ENCODE measurements at regions of chr10 and their contacts with region 1.

Region 1: GRCh38 chr10:4767033-4767814 is 58.8 kb upstream of the AKR1E2 start:
- DNase-seq: no peak
- ATAC-seq: peak; percentile 74
- H3K4me3 ChIP-seq: no peak overlapping the region
- H3K27ac ChIP-seq: no peak overlapping the region
- H3K4me1 ChIP-seq: peaks cover 3 to 5% of the 10 kb centered on the region in 2 donors
- H3K27me3 ChIP-seq: no peaks in the 10 kb centered on the region

Region 2: GRCh38 chr10:3231951-3232730 is 1535.1 kb before region 1 on chr10:
- intact Hi-C with region 1: loop called (anchors 5 kb)
- DNase-seq: peak in 1 of 2 donors; percentile 74
- ATAC-seq: peak; percentile 71
- H3K4me3 ChIP-seq: no peak overlapping the region
- H3K27ac ChIP-seq: peak overlapping the region; percentile 29 to 86
- H3K4me1 ChIP-seq: no peaks in the 10 kb centered on the region
- H3K27me3 ChIP-seq: no peaks in the 10 kb centered on the region

Region 3: DNA sequence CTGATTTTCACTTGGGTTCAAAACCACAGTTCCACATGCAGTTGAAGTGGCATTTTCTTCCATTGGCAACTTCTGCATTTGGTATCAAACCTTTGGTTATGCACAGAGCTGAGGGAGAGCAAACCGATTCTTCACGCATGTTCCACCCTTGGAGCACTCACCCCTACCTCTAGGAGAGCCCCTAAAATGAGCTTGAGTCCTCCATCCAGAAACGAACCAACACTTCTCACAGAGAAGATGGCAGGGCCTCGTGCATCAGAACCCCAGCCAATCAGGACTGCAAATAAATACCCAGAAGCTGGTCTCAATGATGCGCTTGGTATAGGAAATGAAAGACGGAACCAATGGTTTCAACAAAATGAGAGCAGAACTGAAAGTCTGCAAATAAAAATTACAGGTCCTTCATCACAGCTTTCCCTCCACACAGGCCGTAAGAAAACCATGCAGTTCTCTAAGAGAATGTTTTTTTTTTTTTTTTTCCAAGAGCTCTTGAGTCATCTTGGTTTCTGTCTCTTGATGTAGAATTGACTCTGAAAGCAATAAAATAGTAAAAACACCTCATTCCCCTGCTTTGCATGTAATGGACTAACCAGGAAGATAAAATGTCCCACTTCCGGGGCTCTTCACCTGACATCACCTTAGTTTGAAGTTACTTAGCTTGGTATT is 1006.1 kb before region 1 on chr10:
- intact Hi-C with region 1: loop called in 1 of 2 experiments (anchors 10 kb)
- DNase-seq: no peak
- ATAC-seq: no peak
- H3K4me3 ChIP-seq: no peak overlapping the region
- H3K27ac ChIP-seq: no peak overlapping the region
- H3K4me1 ChIP-seq: no peaks in the 10 kb centered on the region
- H3K27me3 ChIP-seq: no peaks in the 10 kb centered on the region

Region 4: GRCh38 chr10:4656576-4657182 is 110.5 kb before region 1 on chr10:
- intact Hi-C with region 1: loop called (anchors 5 to 10 kb)
- DNase-seq: no peak
- ATAC-seq: peak; percentile 80
- H3K4me3 ChIP-seq: no peak overlapping the region
- H3K27ac ChIP-seq: no peak overlapping the region
- H3K4me1 ChIP-seq: peaks cover 0 to under 1% of the 10 kb centered on the region in 2 donors
- H3K27me3 ChIP-seq: no peaks in the 10 kb centered on the region

Region 5: GRCh38 chr10:4678023-4678950 is 88.9 kb before region 1 on chr10:
- intact Hi-C with region 1: loop called in 1 of 2 experiments (anchors 5 kb)
- DNase-seq: no peak
- ATAC-seq: peak; percentile 29
- H3K4me3 ChIP-seq: no peak overlapping the region
- H3K27ac ChIP-seq: peak overlapping the region; percentile 67 to 72
- H3K4me1 ChIP-seq: peaks cover 0 to 2% of the 10 kb centered on the region in 2 donors
- H3K27me3 ChIP-seq: no peaks in the 10 kb centered on the region